A549 (cell line): ENCODE measurements at regions of chr19 and their contacts with region 1.

Region 1: GRCh38 chr19:41597600-41598041 is 21.7 kb downstream of the CEACAM21 start:
- DNase-seq: peak; percentile 85 to 99
- ATAC-seq: peak; percentile 70 to 90; a peak in 5 of 6 replicates
- H3K4me3 ChIP-seq: no peak overlapping the region
- H3K27ac ChIP-seq: no peak overlapping the region
- H3K4me1 ChIP-seq: no peaks in the 10 kb centered on the region
- CTCF ChIP-seq: peak; percentile 99
- EP300 ChIP-seq: no peak
- POLR2A ChIP-seq: no peak
- RAD21 ChIP-seq: peak; percentile 44 to 54; a peak in 3 of 5 replicates

Region 2: GRCh38 chr19:41426952-41427646 is 170.5 kb before region 1 on chr19 and contains the start of gene B3GNT8:
- CTCF ChIA-PET with region 1: interaction called, 10 read pairs
- POLR2A ChIA-PET with region 1: no interaction called
- DNase-seq: no peak
- ATAC-seq: peak; percentile 7 to 10; a peak in 3 of 6 replicates
- H3K4me3 ChIP-seq: no peak within 1 kb of the TSS
- H3K27ac ChIP-seq: no peak within 1 kb of the TSS
- H3K4me1 ChIP-seq: no peaks in the 10 kb centered on the region
- CTCF ChIP-seq: no peak
- EP300 ChIP-seq: no peak
- POLR2A ChIP-seq: no peak
- RAD21 ChIP-seq: no peak
- polyA plus RNA-seq, gene B3GNT8: not detected in 2 replicates

Region 3: DNA sequence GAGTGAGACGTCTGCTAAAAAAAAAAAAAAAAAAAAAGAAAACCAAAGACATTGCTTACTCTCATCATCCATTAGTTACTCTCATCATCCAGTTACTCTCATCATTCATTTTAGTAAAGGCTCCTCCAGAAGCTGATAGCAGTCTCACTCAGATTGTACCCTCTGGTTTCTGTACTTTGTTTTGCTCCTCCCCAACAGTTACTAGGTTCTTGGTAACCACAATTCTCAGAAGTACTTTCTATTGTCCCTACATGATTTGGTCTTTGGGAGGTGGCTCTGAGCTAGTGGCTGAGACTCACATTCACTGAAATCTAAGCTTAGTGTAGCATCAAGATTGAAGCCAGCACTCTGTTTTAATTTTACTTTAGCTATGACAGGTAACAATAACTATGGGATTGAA is 140.4 kb before region 1 on chr19:
- CTCF ChIA-PET with region 1: interaction called, 50 read pairs
- POLR2A ChIA-PET with region 1: no interaction called
- DNase-seq: no peak
- ATAC-seq: no peak
- H3K4me3 ChIP-seq: no peak overlapping the region
- H3K27ac ChIP-seq: no peak overlapping the region
- H3K4me1 ChIP-seq: no peaks in the 10 kb centered on the region
- CTCF ChIP-seq: no peak
- EP300 ChIP-seq: no peak
- POLR2A ChIP-seq: no peak
- RAD21 ChIP-seq: no peak

Region 4: DNA sequence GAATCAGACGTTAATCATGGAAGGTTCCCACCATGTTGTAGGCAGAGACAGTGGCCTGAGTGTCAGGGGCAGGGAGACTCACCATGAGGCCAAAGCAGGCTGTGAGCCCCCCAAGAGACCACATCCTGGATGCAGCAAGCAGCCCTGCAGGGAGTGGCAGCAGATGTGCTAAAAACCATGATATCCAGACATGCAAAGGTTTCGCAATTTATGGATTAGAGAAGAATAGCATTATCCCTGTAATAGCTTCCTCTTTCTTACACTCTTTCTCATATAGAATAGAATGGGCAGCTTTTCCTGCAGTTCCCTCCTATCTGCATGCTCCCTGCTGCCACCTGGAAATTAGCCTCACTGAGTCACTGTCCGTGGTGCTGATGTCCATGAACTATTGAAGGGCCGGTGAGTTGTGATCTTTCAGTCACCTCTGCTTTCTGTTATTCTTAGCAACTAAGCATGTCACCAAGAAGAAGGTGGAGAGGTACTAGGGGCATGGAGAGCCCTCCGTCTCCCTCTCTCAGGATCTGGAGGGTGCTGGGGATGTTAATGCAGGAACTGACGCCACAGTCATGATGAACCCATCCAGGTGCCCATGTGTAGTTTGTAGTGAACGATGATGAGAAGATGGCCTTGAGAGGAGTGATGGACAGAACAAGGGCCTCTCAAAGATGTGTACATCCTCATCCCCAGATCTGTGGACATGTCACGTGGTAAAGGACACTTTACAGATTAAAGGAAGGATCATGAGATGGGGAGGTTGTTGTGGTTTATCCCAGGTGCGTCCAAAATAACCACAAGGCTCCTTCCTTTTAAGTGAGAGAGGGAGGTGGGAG is 19.4 kb after region 1 on chr19:
- CTCF ChIA-PET with region 1: interaction called, 81 read pairs
- POLR2A ChIA-PET with region 1: no interaction called
- DNase-seq: peak; percentile 44 to 49
- ATAC-seq: peak; percentile 44 to 63; a peak in 5 of 6 replicates
- H3K4me3 ChIP-seq: no peak overlapping the region
- H3K27ac ChIP-seq: no peak overlapping the region
- H3K4me1 ChIP-seq: no peaks in the 10 kb centered on the region
- CTCF ChIP-seq: no peak
- EP300 ChIP-seq: no peak
- POLR2A ChIP-seq: no peak
- RAD21 ChIP-seq: no peak

Region 5: DNA sequence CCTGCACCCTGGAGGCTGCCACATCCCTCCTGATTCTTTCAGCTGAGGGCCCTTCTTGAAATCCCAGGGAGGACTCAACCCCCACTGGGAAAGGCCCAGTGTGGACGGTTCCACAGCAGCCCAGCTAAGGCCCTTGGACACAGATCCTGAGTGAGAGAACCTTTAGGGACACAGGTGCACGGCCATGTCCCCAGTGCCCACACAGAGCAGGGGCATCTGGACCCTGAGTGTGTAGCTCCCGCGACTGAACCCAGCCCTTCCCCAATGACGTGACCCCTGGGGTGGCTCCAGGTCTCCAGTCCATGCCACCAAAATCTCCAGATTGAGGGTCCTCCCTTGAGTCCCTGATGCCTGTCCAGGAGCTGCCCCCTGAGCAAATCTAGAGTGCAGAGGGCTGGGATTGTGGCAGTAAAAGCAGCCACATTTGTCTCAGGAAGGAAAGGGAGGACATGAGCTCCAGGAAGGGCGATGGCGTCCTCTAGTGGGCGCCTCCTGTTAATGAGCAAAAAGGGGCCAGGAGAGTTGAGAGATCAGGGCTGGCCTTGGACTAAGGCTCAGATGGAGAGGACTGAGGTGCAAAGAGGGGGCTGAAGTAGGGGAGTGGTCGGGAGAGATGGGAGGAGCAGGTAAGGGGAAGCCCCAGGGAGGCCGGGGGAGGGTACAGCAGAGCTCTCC is 103.9 kb after region 1 on chr19:
- CTCF ChIA-PET with region 1: interaction called, 16 read pairs
- POLR2A ChIA-PET with region 1: no interaction called
- DNase-seq: peak; percentile 58 to 71
- ATAC-seq: peak; percentile 5 to 9; a peak in 4 of 6 replicates
- H3K4me3 ChIP-seq: no peak overlapping the region
- H3K27ac ChIP-seq: peak overlapping the region; percentile 71 to 86
- H3K4me1 ChIP-seq: peaks cover 68% of the 10 kb centered on the region
- CTCF ChIP-seq: peak; percentile 59
- EP300 ChIP-seq: no peak
- POLR2A ChIP-seq: no peak
- RAD21 ChIP-seq: peak; percentile 43 to 73; a peak in 4 of 5 replicates